HCT116 (cell line): ENCODE measurements at regions of chr9 and their contacts with region 1.

Region 1: GRCh38 chr9:104968025-104968982 is 40.3 kb upstream of the ABCA1 start:
- DNase-seq: peak; percentile 54
- ATAC-seq: peak; percentile 97
- H3K4me3 ChIP-seq: peak overlapping the region; percentile 54 to 57
- H3K27ac ChIP-seq: peak overlapping the region; percentile 52; the same call in 1 of the 2 replicates
- H3K4me1 ChIP-seq: peaks cover 4 to 14% of the 10 kb centered on the region in 2 experiments; a peak in 2 of 4 replicates
- H3K27me3 ChIP-seq: no peaks in the 10 kb centered on the region
- CTCF ChIP-seq: no peak
- POLR2A ChIP-seq: peak; percentile 81
- RAD21 ChIP-seq: no peak

Region 2: GRCh38 chr9:104927912-104928740 is 40.2 kb before region 1 on chr9 and contains the start of gene ABCA1:
- CTCF ChIA-PET with region 1: interaction called, 5 read pairs
- POLR2A ChIA-PET with region 1: interaction called, 4 read pairs
- RAD21 ChIA-PET with region 1: no interaction called
- intact Hi-C with region 1: loop called (anchors 1 kb)
- DNase-seq: peak; percentile 29
- ATAC-seq: peak; percentile 50
- H3K4me3 ChIP-seq: peak within 1 kb of the TSS; percentile 49 to 57
- H3K27ac ChIP-seq: peak within 1 kb of the TSS; percentile 33; the same call in 1 of the 2 replicates
- H3K4me1 ChIP-seq: peaks cover 6 to 18% of the 10 kb centered on the region in 2 experiments
- H3K27me3 ChIP-seq: no peaks in the 10 kb centered on the region
- CTCF ChIP-seq: no peak
- POLR2A ChIP-seq: no peak
- RAD21 ChIP-seq: no peak
- total RNA-seq, gene ABCA1: 0.89 TPM